K562 (cell line): ENCODE measurements at regions of chr10 and their contacts with region 1.

Region 1: GRCh38 chr10:102225646-102226541 is at the start of gene ELOVL3:
- DNase-seq: peak; percentile 95 to 99 (median 98)
- ATAC-seq: peak; percentile 97
- H3K4me3 ChIP-seq: peak within 1 kb of the TSS; percentile 28
- H3K27ac ChIP-seq: peak within 1 kb of the TSS; percentile 23; the same call in 1 of the 3 replicates
- H3K4me1 ChIP-seq: peaks cover 11 to 22% of the 10 kb centered on the region in 2 experiments; a peak in 4 of 5 replicates
- H3K27me3 ChIP-seq: peaks cover 3 to 5% of the 10 kb centered on the region in 2 experiments; a peak in 2 of 5 replicates
- CTCF ChIP-seq: no peak
- EP300 ChIP-seq: no peak
- POLR2A ChIP-seq: 0 out of 2 replicates have a peak, but pooled peaks have one; percentile 43
- RAD21 ChIP-seq: no peak
- polyA plus RNA-seq, gene ELOVL3: 2.5 to 3.3 TPM

Region 2: DNA sequence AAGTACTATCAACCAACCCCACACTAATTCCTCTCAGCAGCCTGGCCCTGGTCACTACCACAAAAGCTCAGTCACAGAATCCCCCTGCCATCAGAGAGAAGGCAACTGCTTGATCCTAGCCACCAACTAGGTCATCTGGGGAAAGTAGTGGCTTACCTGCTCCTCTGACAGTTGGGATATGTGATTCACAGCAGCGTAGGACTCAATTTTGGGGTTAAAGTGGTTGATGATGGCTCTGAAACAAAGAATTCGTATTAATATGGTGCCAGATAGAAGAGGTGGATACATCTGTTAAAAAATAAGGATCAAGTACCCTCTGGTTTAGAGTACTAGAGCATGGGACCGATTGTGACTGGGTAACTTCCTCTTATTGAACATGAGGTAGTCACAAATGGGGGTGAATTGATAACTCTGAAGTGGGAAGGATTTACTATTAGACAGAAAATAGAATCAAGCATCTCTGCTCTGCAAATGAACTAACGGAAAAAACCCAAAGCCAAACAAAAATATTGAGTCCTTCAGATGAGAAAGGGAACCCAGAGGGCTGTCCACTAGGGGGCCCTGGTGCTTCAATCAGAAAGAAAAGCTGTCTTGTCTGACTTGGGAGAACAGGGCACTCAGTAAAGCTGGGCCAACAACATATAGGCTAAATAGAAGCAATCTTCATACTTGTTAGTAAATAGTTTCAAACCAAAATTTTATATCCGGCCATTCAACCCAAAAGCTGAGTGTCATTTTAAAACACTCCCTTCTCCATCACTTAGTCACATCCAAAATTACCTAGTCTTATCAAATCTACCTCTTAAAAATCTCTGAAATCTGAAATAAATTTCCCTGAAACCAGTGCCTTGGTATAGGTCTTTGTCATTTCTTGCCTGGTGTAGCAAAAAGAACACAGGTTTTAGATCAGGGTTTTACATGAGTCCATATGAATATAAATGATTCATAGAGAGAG is 336.4 kb before region 1 on chr10:
- CTCF ChIA-PET with region 1: no interaction called
- POLR2A ChIA-PET with region 1: no interaction called
- in situ Hi-C with region 1: no loop called
- intact Hi-C with region 1: no loop called
- DNase-seq: no peak
- ATAC-seq: no peak
- H3K4me3 ChIP-seq: no peak overlapping the region
- H3K27ac ChIP-seq: no peak overlapping the region
- H3K4me1 ChIP-seq: no peaks in the 10 kb centered on the region
- H3K27me3 ChIP-seq: no peaks in the 10 kb centered on the region
- CTCF ChIP-seq: no peak
- EP300 ChIP-seq: no peak
- POLR2A ChIP-seq: no peak
- RAD21 ChIP-seq: no peak

Region 3: DNA sequence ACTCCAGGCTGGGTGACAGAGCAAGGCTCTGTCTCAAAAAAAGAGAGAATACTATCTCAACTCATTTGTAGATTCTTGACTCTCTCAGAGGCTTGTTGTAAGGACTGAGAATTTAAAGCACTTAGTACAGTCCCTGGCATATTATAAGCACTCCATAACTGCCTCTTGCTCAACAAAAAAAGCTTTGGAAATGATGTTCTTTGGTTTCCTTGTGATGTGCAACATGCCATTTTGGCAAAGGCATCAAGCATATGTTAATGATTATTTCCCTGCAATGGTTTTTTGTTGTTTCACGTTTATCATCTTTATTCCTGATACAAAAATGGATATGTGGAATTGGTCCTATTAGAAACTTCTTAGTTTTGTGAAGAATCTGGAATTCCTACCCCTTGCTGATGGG is 58.0 kb before region 1 on chr10:
- CTCF ChIA-PET with region 1: no interaction called
- POLR2A ChIA-PET with region 1: interaction called, 4 read pairs
- in situ Hi-C with region 1: no loop called
- intact Hi-C with region 1: loop called (anchors 2 kb)
- DNase-seq: no peak
- ATAC-seq: no peak
- H3K4me3 ChIP-seq: no peak overlapping the region
- H3K27ac ChIP-seq: no peak overlapping the region
- H3K4me1 ChIP-seq: peaks cover 6 to 10% of the 10 kb centered on the region in 2 experiments; a peak in 4 of 5 replicates
- H3K27me3 ChIP-seq: no peaks in the 10 kb centered on the region
- CTCF ChIP-seq: no peak
- EP300 ChIP-seq: no peak
- POLR2A ChIP-seq: no peak
- RAD21 ChIP-seq: no peak

Region 4: DNA sequence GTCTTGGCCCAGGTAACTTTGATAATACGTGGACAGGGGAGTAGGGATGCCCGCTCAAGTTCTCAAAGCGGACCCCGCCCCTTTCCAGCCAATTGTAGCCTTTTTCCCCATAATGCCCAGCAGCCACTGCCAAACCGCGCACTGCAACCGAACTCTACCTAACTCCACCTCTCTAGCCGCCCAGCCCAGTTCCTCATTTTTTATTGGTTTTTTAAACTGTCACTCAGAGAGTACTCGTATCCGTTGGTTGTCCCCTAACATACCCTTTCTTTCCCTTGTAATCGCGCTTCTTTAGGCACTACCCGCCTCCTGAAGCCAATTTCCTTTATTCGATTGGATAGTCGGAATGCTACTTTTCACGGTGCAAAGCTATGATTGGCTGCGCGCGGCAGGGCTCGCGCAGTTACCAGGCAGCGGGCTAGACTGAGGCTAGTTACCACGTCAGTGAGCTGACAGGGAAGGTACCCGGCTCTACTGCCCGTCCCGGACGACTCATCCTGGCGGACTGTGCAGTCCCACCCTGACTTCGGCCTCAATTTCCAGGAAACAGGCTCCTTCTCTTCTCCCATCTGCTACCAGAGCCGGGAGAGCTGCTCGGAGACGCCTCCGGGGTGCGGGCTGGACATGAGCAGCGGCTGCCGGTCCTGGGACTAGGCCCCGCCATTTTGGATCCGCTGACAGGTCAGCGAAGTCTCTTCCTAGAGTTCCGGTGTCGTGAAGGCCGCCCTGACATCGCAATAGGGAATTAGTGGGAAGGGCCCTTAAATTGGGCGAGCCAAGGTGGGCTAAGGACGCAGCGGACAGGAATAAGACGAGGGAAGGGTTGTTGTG is 19.4 kb after region 1 on chr10 and contains the start of gene GBF1:
- CTCF ChIA-PET with region 1: no interaction called
- POLR2A ChIA-PET with region 1: interaction called, 12 read pairs
- in situ Hi-C with region 1: no loop called
- intact Hi-C with region 1: no loop called
- DNase-seq: peak; percentile 86 to 97 (median 92)
- ATAC-seq: peak; percentile 92
- H3K4me3 ChIP-seq: peak within 1 kb of the TSS; percentile 84
- H3K27ac ChIP-seq: peak within 1 kb of the TSS; percentile 75
- H3K4me1 ChIP-seq: peaks cover 15 to 25% of the 10 kb centered on the region in 2 experiments
- H3K27me3 ChIP-seq: peaks cover 0 to 3% of the 10 kb centered on the region in 2 experiments; a peak in 1 of 5 replicates
- CTCF ChIP-seq: no peak
- EP300 ChIP-seq: no peak
- POLR2A ChIP-seq: peak; percentile 90
- RAD21 ChIP-seq: no peak
- polyA plus RNA-seq, gene GBF1: 0.69 to 1.3 TPM

Region 5: GRCh38 chr10:102352066-102352715 is 126.3 kb after region 1 on chr10:
- CTCF ChIA-PET with region 1: interaction called, 26 read pairs
- POLR2A ChIA-PET with region 1: interaction called, 4 read pairs
- in situ Hi-C with region 1: loop called (anchors 5 kb)
- intact Hi-C with region 1: loop called (anchors 1 kb)
- DNase-seq: peak; percentile 63 to 68 (median 65)
- ATAC-seq: peak; percentile 87
- H3K4me3 ChIP-seq: no peak overlapping the region
- H3K27ac ChIP-seq: no peak overlapping the region
- H3K4me1 ChIP-seq: no peaks in the 10 kb centered on the region
- H3K27me3 ChIP-seq: no peaks in the 10 kb centered on the region
- CTCF ChIP-seq: peak; percentile 72 to 84 (median 77)
- EP300 ChIP-seq: no peak
- POLR2A ChIP-seq: no peak
- RAD21 ChIP-seq: peak; percentile 38 to 68

Region 6: DNA sequence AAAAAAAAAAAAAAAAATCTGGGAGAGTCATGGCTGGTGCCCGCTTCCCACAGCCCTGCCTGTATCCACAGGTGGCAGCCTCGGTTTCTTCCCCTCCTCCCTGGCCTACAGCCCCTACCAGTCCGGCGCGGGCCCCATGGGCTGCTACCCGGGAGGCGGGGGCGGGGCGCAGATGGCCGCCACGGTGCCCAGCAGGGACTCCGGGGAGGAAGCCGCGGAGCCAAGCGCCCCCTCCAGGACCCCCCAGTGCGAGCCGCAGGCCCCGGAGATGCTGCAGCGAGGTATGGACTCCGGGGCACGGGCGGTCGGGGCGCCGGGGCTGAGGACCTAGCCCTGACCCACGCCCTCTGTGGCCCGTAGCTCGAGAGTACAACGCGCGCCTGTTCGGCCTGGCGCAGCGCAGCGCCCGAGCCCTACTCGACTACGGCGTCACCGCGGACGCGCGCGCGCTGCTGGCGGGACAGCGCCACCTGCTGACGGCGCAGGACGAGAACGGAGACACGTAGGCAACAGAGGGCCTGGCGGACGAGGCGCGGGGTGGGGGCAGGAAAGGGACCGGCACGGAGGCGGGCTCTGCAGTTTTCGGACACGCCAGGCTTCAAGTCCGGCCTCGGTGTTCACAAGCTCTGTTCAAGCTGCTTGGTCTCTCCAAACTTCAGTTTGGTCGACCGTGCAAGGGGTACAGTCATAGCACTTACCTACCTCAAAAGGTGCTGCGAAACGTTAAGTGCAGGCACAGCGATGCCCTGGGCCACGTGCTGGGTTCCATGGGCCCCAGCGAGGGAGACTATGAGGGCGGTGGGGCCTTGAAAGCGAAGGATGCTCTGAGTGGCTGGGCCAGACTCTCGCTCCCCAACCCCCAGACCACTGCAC is 173.6 kb after region 1 on chr10:
- CTCF ChIA-PET with region 1: interaction called, 12 read pairs
- POLR2A ChIA-PET with region 1: interaction called, 4 read pairs
- in situ Hi-C with region 1: no loop called
- intact Hi-C with region 1: loop called (anchors 1 kb)
- DNase-seq: peak; percentile 77 to 90 (median 80)
- ATAC-seq: peak; percentile 82
- H3K4me3 ChIP-seq: peak overlapping the region; percentile 44
- H3K27ac ChIP-seq: peak overlapping the region; percentile 19; the same call in 2 of the 3 replicates
- H3K4me1 ChIP-seq: peaks cover 17 to 62% of the 10 kb centered on the region in 2 experiments; a peak in 4 of 5 replicates
- H3K27me3 ChIP-seq: no peaks in the 10 kb centered on the region
- CTCF ChIP-seq: peak; percentile 85 to 94 (median 85)
- EP300 ChIP-seq: no peak
- POLR2A ChIP-seq: no peak; the same call in 1 of the 2 replicates
- RAD21 ChIP-seq: peak; percentile 62 to 74

Region 7: DNA sequence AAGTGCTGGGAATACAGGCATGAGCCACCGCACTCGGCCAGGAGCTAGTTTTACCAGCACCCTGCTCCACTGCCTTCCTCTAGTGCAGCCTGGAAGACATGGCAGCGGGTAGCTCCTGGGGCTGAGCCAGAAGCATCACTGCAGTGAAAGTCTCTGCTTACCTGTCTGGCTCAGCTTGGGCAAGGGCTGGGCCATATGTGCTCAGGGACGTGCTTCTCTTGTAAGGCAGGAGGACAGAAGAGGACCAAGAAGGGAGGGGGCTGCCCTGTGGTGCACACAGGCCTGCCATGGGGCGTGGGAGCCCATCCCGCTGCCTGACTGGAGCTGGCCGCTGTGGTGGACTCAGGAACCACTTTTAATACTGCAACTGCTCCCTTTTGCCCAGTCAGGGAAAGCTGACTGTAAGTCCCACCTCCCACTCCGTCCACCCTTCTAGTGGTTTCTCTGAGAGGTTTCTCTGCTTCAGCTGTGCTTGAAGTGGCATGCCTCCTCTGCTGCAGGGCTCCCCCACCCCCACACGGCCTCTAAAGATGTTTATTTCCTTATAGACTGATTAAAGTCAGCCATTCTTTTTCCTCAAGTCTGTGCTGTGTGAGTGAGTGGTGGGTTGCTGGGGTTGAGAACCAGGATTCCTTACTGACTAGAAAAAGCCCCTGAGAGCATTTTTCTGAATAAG is 250.7 kb after region 1 on chr10:
- CTCF ChIA-PET with region 1: no interaction called
- POLR2A ChIA-PET with region 1: no interaction called
- in situ Hi-C with region 1: no loop called
- intact Hi-C with region 1: loop called (anchors 5 kb)
- DNase-seq: no peak
- ATAC-seq: no peak
- H3K4me3 ChIP-seq: no peak overlapping the region
- H3K27ac ChIP-seq: no peak overlapping the region
- H3K4me1 ChIP-seq: peaks cover 4 to 9% of the 10 kb centered on the region in 2 experiments; a peak in 4 of 5 replicates
- H3K27me3 ChIP-seq: no peaks in the 10 kb centered on the region
- CTCF ChIP-seq: no peak
- EP300 ChIP-seq: no peak
- POLR2A ChIP-seq: no peak
- RAD21 ChIP-seq: no peak

Region 8: DNA sequence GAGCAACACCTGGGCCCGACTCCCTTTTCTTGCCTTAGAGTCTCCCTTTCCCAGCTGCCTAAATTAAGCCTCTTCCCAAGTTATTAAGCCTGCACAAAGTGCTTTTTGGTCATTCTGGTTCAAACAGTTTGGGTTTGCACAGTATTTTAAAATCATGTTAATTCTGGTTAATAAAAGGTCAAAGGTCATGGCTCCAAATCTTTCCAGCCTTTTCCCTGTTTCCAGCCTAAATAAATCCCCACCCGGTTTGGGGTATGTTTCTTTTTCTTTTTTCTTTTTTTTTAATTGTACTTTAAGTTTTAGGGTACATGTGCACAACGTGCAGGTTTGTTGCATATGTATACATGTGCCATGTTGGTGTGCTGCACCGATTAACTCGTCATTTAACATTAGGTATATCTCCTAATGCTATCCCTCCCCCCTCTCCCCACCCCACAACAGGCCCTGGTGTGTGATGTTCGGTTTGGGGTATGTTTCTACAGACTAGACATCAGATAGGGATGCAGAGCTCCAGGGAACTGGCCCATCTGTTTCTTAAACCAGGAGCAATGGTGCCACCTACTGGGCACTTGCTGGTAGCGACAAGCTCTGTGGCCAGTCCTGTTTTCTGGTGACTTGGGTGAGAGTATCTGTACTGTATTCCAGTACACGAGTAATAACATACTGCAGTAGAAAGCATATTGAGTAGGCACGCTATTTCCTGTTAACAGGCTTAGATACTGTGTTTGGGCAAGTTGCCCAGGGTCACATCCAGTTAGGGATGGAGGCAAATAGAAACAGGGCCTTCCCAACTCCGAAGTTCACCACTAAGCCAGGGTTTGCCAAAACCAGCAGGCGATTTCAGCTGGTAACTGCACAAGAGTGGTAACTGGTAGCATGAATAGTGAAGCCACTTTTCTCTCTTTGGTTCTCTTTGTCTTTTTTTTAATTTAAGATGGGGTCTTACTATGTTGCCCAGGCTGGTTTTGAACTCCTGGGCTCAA is 357.8 kb after region 1 on chr10:
- CTCF ChIA-PET with region 1: interaction called, 8 read pairs
- POLR2A ChIA-PET with region 1: no interaction called
- in situ Hi-C with region 1: loop called (anchors 25 kb)
- intact Hi-C with region 1: loop called (anchors 5 kb)
- DNase-seq: peak; percentile 82 to 88 (median 84)
- ATAC-seq: peak; percentile 99
- H3K4me3 ChIP-seq: no peak overlapping the region
- H3K27ac ChIP-seq: no peak overlapping the region
- H3K4me1 ChIP-seq: peaks cover 0 to 3% of the 10 kb centered on the region in 2 experiments; a peak in 2 of 5 replicates
- H3K27me3 ChIP-seq: no peaks in the 10 kb centered on the region
- CTCF ChIP-seq: peak; percentile 70 to 85 (median 77)
- EP300 ChIP-seq: no peak
- POLR2A ChIP-seq: no peak
- RAD21 ChIP-seq: peak; percentile 71 to 82